ENCODE measurements at regions of chr2 and their contacts with region 1.

Region 1: DNA sequence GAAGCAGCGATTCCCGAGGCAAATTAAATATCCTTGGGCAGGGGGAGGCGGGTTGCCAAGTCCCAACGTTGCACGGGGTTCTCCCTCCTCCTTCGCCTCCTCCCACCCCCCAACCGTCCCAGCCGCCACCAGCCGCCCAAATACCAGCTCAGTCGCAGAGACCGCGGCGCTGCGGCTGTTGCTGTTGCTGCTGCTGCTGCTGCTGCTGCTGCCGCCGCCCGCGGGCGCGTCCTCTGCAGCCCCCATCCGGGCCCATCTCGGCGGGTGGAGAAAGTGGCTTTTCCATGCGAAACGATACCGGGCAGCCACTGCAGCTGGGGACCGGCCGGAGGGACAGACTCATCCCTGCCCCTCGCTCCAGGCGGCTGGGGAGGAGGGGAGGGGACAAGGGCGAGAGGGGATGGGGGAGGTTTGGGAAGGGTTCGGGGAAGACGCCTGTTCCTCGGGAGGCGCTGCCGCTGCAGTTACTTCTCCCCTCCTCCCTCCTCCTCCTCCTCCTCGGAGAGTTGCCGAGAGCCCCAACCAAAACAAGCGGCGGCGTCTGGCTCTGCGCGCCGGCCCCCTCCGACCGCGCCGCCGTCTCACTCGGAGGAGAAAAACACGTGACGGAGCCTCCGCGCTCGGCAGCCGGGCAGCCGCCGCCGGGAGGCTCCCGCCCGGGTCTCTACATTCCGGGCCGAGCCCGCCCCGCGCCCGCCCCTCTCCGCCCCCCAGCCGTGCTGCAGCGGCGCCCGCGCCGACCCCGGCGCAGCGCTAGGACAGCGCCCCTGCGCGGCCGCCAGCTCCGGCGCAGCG is at the start of gene IRS1:
- DNase-seq: peak; percentile 50
- H3K4me3 Mint-ChIP-seq: peak within 1 kb of the TSS; percentile 87
- H3K27ac Mint-ChIP-seq: peak within 1 kb of the TSS; percentile 55
- H3K4me1 Mint-ChIP-seq: peaks cover 36% of the 10 kb centered on the region
- H3K27me3 Mint-ChIP-seq: peaks cover 11% of the 10 kb centered on the region
- total RNA-seq, gene IRS1: 3.8 and 4.2 TPM in 2 replicates

Region 2: DNA sequence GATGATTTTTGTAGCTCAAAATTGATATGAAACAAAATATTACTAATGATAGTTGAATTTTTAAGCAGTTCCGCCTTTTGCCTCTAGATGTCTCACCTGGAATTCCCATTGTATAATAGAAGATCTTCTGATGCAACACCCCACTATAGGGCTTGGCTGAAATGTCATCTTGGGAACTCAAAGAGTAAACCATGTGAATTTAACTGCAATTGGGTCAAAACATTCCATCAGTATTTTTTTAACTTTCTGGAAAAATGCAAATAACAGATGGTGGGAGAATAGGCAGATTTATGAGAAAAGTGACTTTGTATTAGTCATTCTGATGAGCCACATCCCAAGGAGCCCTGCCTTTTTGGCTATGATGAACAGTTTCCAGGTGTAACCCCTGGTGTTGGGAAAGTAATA is 909.9 kb before region 1 on chr2:
- intact Hi-C with region 1: loop called (anchors 1 kb)
- DNase-seq: no peak
- H3K4me3 Mint-ChIP-seq: no peak overlapping the region
- H3K27ac Mint-ChIP-seq: no peak overlapping the region
- H3K4me1 Mint-ChIP-seq: no peaks in the 10 kb centered on the region
- H3K27me3 Mint-ChIP-seq: no peaks in the 10 kb centered on the region

Region 3: DNA sequence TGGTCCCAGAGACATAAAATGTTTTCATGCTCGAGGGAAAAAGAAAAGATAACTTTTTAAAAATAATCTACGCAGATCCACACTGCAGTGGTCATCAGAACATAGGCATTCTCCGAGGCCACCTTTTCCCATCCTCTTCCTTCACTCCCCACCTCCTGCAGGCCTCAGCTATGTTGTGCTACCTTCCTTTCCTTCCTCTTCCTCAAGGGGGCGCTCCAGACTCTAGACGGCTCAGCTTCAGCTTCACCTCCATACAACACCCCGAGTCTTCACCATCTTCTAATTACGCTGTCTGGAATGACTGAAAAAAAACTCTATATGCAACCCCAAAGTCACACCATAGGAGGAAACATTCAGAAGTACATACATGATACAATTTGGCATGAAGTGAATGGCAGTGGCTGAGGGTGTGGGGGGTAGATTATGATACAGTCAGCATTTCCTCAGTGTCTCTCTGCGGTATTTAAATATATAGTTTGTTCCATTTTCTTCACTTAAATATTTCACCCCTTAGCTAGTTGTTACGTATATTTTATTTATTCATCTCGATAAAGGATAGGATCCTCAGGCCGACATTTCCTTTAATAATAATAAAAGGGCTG is 583.4 kb before region 1 on chr2:
- intact Hi-C with region 1: loop called (anchors 1 kb)
- DNase-seq: peak; percentile 41
- H3K4me3 Mint-ChIP-seq: no peak overlapping the region
- H3K27ac Mint-ChIP-seq: no peak overlapping the region
- H3K4me1 Mint-ChIP-seq: peaks cover 6% of the 10 kb centered on the region
- H3K27me3 Mint-ChIP-seq: peaks cover 11% of the 10 kb centered on the region

Region 4: DNA sequence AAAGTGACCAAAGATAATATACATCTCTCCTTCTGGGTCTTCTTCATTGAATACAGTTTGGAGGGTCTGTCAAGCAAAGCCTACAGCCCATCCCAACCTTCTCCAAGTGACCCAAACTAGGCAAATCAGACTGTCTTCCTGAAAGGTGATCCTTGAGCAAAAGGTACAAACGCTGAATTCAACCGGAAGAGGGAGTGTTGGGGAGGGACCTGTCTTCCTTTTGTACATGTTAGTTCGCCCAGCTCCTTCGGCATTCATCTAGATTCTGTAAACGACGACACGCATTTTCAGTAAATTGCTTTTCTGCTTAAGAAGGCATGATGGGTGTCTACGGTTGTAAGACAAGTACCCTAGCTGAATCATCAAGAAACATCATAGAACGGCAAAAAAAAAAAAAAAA is 291.9 kb before region 1 on chr2:
- intact Hi-C with region 1: loop called (anchors 1 kb)
- DNase-seq: no peak
- H3K4me3 Mint-ChIP-seq: no peak overlapping the region
- H3K27ac Mint-ChIP-seq: no peak overlapping the region
- H3K4me1 Mint-ChIP-seq: no peaks in the 10 kb centered on the region
- H3K27me3 Mint-ChIP-seq: peaks cover 11% of the 10 kb centered on the region

Region 5: GRCh38 chr2:226716126-226716525 is 83.3 kb before region 1 on chr2:
- intact Hi-C with region 1: loop called (anchors 2 kb)
- DNase-seq: no peak
- H3K4me3 Mint-ChIP-seq: no peak overlapping the region
- H3K27ac Mint-ChIP-seq: peak overlapping the region; percentile 51
- H3K4me1 Mint-ChIP-seq: peaks cover 17% of the 10 kb centered on the region
- H3K27me3 Mint-ChIP-seq: peaks cover 20% of the 10 kb centered on the region

Region 6: GRCh38 chr2:226835796-226836547 is 36.6 kb after region 1 on chr2 and contains the start of gene RHBDD1:
- intact Hi-C with region 1: loop called (anchors 1 kb)
- DNase-seq: peak; percentile 93
- H3K4me3 Mint-ChIP-seq: peak within 1 kb of the TSS; percentile 92
- H3K27ac Mint-ChIP-seq: peak within 1 kb of the TSS; percentile 99
- H3K4me1 Mint-ChIP-seq: peaks cover 62% of the 10 kb centered on the region
- H3K27me3 Mint-ChIP-seq: no peaks in the 10 kb centered on the region
- total RNA-seq, gene RHBDD1: 39.9 and 48.0 TPM in 2 replicates

Region 7: GRCh38 chr2:227106845-227107759 is 307.7 kb after region 1 on chr2:
- intact Hi-C with region 1: loop called (anchors 5 kb)
- DNase-seq: no peak
- H3K4me3 Mint-ChIP-seq: no peak overlapping the region
- H3K27ac Mint-ChIP-seq: no peak overlapping the region
- H3K4me1 Mint-ChIP-seq: no peaks in the 10 kb centered on the region
- H3K27me3 Mint-ChIP-seq: no peaks in the 10 kb centered on the region

Region 8: DNA sequence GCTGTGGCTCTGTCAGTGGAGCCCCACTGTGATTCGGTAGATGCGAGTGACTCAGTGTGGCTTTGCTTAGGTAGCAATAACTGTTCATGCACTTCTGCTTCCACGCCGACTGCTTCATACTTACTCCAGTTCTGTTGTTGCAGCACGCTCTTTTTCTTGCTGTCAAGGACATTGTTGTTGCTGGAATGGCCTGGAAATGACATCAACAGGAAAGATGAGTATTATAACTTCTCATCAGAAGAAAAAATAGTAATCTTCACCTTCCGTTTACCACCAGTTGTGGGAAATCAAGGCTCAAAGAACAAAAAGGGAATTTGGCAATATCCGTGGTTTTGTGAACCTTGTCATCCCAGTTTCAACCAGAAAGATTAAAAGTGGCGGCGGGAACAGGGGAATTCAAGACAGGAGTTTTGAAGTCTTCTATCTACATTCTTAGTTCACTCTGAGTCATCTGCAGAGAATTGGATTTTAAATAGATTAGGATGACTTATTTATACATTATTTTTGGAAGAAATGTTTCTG is 571.5 kb after region 1 on chr2:
- intact Hi-C with region 1: no loop called
- DNase-seq: no peak
- H3K4me3 Mint-ChIP-seq: no peak overlapping the region
- H3K27ac Mint-ChIP-seq: no peak overlapping the region
- H3K4me1 Mint-ChIP-seq: peaks cover 12% of the 10 kb centered on the region
- H3K27me3 Mint-ChIP-seq: peaks cover 2% of the 10 kb centered on the region